Right ventricle myocardium superior (tissue), 1 donor: ENCODE measurements at regions of chr3 and their contacts with region 1.

Region 1: DNA sequence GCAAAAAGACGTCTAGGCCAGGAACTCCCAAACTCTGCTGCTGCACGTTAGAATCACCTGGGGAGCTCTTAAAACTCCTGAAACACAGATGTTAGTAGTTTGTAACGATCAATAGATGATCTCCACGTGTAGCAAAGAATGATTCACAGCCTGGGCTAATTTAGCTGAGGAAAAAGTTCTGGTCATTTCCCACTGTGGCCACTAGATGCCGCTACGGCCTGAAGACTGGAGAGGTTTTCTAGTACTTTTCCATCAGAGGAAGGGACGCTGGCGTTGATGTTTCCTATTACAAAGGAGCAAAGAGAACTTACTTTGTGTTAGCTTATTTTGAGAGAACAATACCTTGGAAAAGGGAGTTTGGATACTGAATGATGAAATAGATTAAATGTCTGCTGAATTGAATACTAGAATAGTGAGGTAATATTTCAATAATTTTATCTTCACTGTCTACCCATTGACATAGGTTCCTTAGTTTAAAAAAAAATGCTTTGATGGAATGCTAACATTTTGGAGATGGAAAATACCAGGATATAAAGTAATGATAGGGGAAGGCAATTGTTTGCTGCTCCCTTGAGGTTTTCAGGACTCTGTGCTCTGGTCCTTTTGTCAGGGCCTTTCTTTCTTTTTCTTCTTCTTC is 159.1 kb downstream of the P3H2 start:
- DNase-seq: peak; percentile 72
- ATAC-seq: peak; percentile 85

Region 2: DNA sequence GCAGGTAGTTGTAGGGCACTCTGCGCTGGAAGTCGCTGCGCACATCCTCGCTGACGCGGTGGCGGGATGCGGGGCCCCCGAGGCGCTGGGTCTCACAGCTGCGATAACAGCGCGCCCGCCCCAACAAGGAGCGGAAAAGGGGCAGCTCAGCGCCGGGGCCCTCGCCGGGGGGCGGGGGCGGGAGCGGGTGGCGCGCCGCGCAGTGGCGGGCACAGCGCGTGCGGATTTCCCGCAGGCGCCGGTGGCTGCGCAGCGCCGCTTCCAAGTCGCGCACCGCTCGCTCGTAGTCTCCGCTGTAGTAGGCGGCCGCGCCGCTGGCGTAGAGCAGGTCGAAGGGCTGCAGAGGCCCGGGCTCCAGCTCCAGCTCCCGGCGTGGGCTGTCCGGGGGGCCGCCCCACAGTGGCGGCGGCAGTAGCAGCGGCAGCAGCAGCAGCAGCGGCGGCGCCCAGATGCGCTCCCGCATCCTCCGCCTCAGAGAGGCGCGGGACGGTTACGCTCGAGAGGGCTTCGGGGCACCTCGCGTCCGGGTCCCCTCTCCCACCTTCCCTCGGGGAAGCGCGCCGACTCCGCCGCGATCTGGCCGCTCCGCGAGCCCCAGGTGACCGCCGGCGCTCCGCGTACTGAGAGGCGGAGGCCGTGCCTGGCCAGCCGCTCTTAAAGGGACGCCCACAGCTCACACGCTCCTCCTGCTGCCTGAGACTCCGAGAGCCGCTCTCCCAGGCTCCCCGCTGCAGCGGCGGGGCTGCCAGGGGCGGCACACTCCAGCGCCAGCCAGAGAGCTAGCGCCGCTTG is 158.8 kb after region 1 on chr3 and contains the start of gene P3H2:
- intact Hi-C with region 1: loop called (anchors 10 kb)
- DNase-seq: peak; percentile 85
- ATAC-seq: peak; percentile 99
- total RNA-seq, gene P3H2: 1.3 TPM

Region 3: DNA sequence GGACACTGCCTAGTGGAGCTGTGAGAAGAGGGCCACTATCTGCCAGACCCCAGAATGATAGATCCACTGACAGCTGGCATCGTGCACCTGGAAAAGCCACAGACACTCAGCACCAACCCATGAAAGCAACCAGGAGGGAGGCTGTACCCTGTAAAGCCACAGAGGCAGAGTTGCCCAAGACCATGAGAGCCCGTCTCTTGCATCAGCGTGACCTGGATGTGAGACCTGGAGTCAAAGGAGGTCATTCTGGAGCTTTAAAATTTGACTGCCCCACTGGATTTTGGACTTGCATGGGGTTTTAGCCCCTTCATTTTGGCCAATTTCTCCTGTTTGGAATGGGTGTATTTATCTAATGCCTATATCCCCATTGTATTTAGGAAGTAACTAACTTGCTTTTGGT is 242.6 kb after region 1 on chr3:
- intact Hi-C with region 1: loop called (anchors 5 kb)
- DNase-seq: no peak
- ATAC-seq: no peak

Region 4: GRCh38 chr3:190321789-190322603 is 360.4 kb after region 1 on chr3 and contains the start of gene CLDN1:
- intact Hi-C with region 1: loop called (anchors 5 kb)
- DNase-seq: peak; percentile 87
- ATAC-seq: peak; percentile 98
- total RNA-seq, gene CLDN1: not detected